MCF 10A (cell line): ENCODE measurements at regions of chr2 and their contacts with region 1.

Region 1: GRCh38 chr2:193695367-193695766 is 1500.6 kb upstream of the TMEFF2 start:
- DNase-seq: peak; percentile 57
- H3K4me3 Mint-ChIP-seq: no peak overlapping the region
- H3K27ac Mint-ChIP-seq: no peak overlapping the region
- H3K4me1 Mint-ChIP-seq: no peaks in the 10 kb centered on the region
- H3K27me3 Mint-ChIP-seq: no peaks in the 10 kb centered on the region
- CTCF ChIP-seq: peak; percentile 46

Region 2: DNA sequence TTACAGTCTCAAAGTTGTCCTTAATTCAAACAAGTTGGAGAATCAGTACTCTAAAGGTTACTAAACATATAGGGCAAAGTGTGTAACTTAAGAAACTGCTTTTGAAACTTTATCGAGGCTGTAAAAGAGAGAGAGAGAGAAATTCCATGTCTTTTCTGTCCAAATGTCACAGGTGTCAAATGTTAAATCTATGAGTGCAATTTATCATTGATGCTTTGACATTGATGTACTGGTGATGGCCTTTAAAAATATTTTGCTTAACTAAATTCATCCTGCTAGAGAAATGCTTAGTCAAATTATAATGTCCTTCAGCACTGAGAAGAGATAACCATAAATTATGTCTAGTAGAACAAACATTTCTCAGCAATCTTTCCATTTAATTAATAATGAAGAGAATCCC is 101.5 kb after region 1 on chr2:
- CTCF ChIA-PET with region 1: no interaction called
- POLR2A ChIA-PET with region 1: no interaction called
- intact Hi-C with region 1: no loop called
- DNase-seq: no peak
- H3K4me3 Mint-ChIP-seq: no peak overlapping the region
- H3K27ac Mint-ChIP-seq: no peak overlapping the region
- H3K4me1 Mint-ChIP-seq: peaks cover 5% of the 10 kb centered on the region
- H3K27me3 Mint-ChIP-seq: no peaks in the 10 kb centered on the region
- CTCF ChIP-seq: no peak

Region 3: GRCh38 chr2:194819344-194819743 is 1124.0 kb after region 1 on chr2:
- CTCF ChIA-PET with region 1: interaction called, 8 read pairs
- POLR2A ChIA-PET with region 1: no interaction called
- intact Hi-C with region 1: loop called (anchors 2 kb)
- DNase-seq: peak; percentile 50
- H3K4me3 Mint-ChIP-seq: no peak overlapping the region
- H3K27ac Mint-ChIP-seq: no peak overlapping the region
- H3K4me1 Mint-ChIP-seq: no peaks in the 10 kb centered on the region
- H3K27me3 Mint-ChIP-seq: no peaks in the 10 kb centered on the region
- CTCF ChIP-seq: peak; percentile 20